ENCODE measurements at regions of chr1 and their contacts with region 1.

Region 1: DNA sequence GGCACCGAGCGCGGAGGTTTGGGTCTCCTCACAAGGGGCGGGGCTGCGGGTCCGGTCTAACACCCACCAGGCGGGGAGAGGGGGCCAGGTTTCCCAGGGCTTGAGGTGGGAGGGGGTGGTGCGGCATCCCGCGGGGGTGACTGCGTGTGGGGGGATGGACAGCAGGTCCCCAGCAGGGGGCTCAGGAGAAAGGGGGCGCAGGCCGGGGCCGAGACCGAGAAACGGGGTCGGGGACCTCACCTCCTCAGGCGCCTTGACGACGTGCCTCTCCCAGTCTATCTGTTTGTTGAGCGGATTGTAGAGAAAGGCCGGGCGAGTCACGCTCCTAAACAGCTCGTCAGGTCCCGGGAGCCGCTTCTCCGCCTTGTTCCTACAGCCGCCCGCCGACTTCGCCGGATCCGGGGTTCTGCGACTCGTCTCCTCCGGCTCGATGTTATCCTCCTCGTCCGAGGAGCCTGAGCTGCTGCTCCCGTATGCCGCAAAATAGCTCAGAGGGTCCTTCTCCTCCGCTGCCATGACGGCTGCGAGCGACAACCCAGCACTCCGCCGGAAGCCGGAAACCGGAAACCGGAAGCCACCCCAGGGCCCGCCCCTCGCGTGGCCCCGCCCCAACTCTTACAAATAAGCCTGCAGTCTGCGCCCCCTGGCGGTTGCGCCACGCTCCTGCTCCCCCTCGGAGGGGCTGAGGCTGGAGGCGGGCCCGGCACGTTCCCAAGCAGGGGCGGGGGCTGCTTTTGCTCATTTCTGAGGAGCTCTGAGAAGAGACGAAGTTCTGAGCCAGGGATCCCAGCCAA is at the start of gene C1orf52:
- DNase-seq: peak; percentile 62
- H3K4me3 ChIP-seq: peak within 1 kb of the TSS; percentile 94 to 99 (median 98)
- H3K27ac ChIP-seq: peak within 1 kb of the TSS; percentile 87 to 93 (median 92)
- H3K4me1 ChIP-seq: peaks cover 0 to 54% (median 16%) of the 10 kb centered on the region in 3 donors
- H3K27me3 ChIP-seq: no peaks in the 10 kb centered on the region
- CTCF ChIP-seq: peak; percentile 96 to 99 (median 98)
- POLR2A ChIP-seq: peak in 2 of 4 donors; percentile 57 to 77
- total RNA-seq, gene C1orf52: 9.1 to 15.2 (median 12.2) TPM

Region 2: GRCh38 chr1:84944767-84945486 is 314.4 kb before region 1 on chr1:
- intact Hi-C with region 1: loop called (anchors 5 kb)
- DNase-seq: no peak
- H3K4me3 ChIP-seq: peak overlapping the region in 3 of 4 donors; percentile 45 to 67 (median 48)
- H3K27ac ChIP-seq: peak overlapping the region; percentile 38 to 86 (median 80)
- H3K4me1 ChIP-seq: peaks cover 18 to 40% (median 24%) of the 10 kb centered on the region in 3 donors
- H3K27me3 ChIP-seq: no peaks in the 10 kb centered on the region
- CTCF ChIP-seq: peak; percentile 79 to 95 (median 90)
- POLR2A ChIP-seq: no peak

Region 3: DNA sequence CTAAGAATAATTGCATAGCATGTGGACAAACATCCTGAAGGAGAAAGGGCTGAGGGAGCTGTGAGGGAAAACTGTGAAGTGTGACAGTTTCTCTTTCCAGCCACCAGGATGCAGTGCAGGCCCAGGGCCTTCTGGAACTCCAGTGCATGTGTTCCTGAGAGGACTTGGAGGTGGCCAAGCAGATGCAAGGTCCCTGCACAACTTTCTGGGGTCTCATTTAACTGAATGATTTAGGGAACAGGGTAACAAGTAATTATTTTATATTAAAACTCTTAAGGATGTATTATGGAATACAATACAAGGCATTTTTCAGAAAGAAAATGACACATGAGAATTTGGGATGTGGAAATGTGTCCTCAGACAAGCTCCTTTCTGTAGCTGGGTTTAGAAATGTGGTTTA is 149.8 kb before region 1 on chr1:
- intact Hi-C with region 1: loop called (anchors 5 kb)
- DNase-seq: no peak
- H3K4me3 ChIP-seq: no peak overlapping the region
- H3K27ac ChIP-seq: no peak overlapping the region
- H3K4me1 ChIP-seq: no peaks in the 10 kb centered on the region
- H3K27me3 ChIP-seq: no peaks in the 10 kb centered on the region
- CTCF ChIP-seq: peak in 5 of 6 experiments; percentile 58 to 78 (median 78)
- POLR2A ChIP-seq: no peak

Region 4: GRCh38 chr1:85356130-85356529 is 96.8 kb after region 1 on chr1:
- intact Hi-C with region 1: no loop called
- DNase-seq: no peak
- H3K4me3 ChIP-seq: no peak overlapping the region
- H3K27ac ChIP-seq: no peak overlapping the region
- H3K4me1 ChIP-seq: peaks cover 0 to 11% (median 0%) of the 10 kb centered on the region in 3 donors
- H3K27me3 ChIP-seq: no peaks in the 10 kb centered on the region
- CTCF ChIP-seq: no peak
- POLR2A ChIP-seq: no peak

Region 5: DNA sequence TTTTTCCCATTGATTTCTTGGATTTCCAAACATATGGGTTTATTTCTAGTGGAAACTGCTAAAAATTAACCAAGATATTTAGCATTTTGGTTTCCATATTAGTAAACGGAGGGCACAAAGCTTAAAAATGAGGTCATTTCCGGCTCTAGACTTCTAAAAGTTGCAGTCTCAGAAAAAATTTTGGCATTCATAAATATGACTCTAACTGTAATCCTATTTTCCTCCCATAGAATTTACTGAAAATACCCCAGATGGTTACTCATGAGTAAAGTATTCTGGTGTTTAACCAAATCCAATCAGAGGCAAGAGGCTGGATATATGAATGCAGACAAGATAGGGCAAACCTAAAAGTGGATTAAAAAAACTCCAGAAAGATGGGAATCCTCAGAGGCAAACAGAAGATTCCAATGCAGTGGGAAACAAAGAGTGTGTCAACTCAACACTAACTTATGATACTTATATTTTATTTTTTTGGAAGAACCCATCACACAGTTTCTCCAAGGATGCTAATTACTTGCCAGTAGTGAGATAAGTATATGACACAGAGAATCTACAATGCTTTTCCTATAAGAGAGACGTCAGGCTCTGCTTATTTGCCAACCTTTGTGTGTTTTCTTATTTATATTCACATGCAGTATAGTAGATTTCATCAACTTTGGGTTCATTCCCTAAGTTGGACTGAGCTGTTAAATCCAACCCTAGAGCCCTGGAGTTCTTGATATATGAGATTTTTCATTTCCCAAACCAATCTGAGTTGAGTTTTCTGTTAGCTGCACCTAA is 107.3 kb after region 1 on chr1:
- intact Hi-C with region 1: no loop called
- DNase-seq: no peak
- H3K4me3 ChIP-seq: no peak overlapping the region
- H3K27ac ChIP-seq: no peak overlapping the region
- H3K4me1 ChIP-seq: no peaks in the 10 kb centered on the region
- H3K27me3 ChIP-seq: no peaks in the 10 kb centered on the region
- CTCF ChIP-seq: no peak
- POLR2A ChIP-seq: no peak